CD14-positive monocyte (primary cell): ENCODE measurements at regions of chr22 and their contacts with region 1.

Region 1: GRCh38 chr22:38872172-38872830 is at the start of gene CBX6:
- DNase-seq: peak; percentile 86 to 91 (median 87)
- H3K4me3 ChIP-seq: peak within 1 kb of the TSS; percentile 90 to 95 (median 93)
- H3K4me3 Mint-ChIP-seq: peak within 1 kb of the TSS; percentile 95
- H3K27ac ChIP-seq: peak within 1 kb of the TSS; percentile 63 to 75
- H3K27ac Mint-ChIP-seq: peak within 1 kb of the TSS; percentile 87 to 97 (median 92)
- H3K4me1 ChIP-seq: peaks cover 29 to 43% of the 10 kb centered on the region in 2 donors
- H3K4me1 Mint-ChIP-seq: peaks cover 32% of the 10 kb centered on the region
- H3K27me3 ChIP-seq: peaks cover 0 to 16% of the 10 kb centered on the region in 2 donors
- H3K27me3 Mint-ChIP-seq: peaks cover 9 to 27% (median 24%) of the 10 kb centered on the region in 3 donors
- CTCF ChIP-seq: no peak
- polyA plus RNA-seq, gene CBX6: 2.1 to 26.7 (median 5.0) TPM

Region 2: GRCh38 chr22:38755911-38756532 is 116.3 kb before region 1 on chr22 and contains the start of gene SUN2:
- intact Hi-C with region 1: loop called in 1 of 2 experiments (anchors 5 kb)
- DNase-seq: peak; percentile 89 to 90 (median 90)
- H3K4me3 ChIP-seq: peak within 1 kb of the TSS; percentile 88 to 98 (median 92)
- H3K4me3 Mint-ChIP-seq: peak within 1 kb of the TSS; percentile 93 to 97
- H3K27ac ChIP-seq: peak within 1 kb of the TSS; percentile 99 to 100
- H3K27ac Mint-ChIP-seq: peak within 1 kb of the TSS; percentile 98 to 100 (median 99)
- H3K4me1 ChIP-seq: peaks cover 64 to 70% of the 10 kb centered on the region in 2 donors
- H3K4me1 Mint-ChIP-seq: peaks cover 68% of the 10 kb centered on the region
- H3K27me3 ChIP-seq: no peaks in the 10 kb centered on the region
- H3K27me3 Mint-ChIP-seq: peaks cover 0 to 3% (median 0%) of the 10 kb centered on the region in 3 donors
- CTCF ChIP-seq: no peak
- polyA plus RNA-seq, gene SUN2: 95.8 to 159 (median 97.8) TPM

Region 3: GRCh38 chr22:38967451-38968450 is 95.5 kb after region 1 on chr22:
- intact Hi-C with region 1: loop called in 1 of 2 experiments (anchors 5 kb)
- DNase-seq: peak; percentile 98 to 100 (median 99)
- H3K4me3 ChIP-seq: peak overlapping the region in 1 of 3 experiments; percentile 33
- H3K4me3 Mint-ChIP-seq: peak overlapping the region in 1 of 2 donors; percentile 64
- H3K27ac ChIP-seq: peak overlapping the region; percentile 80 to 88
- H3K27ac Mint-ChIP-seq: peak overlapping the region; percentile 91 to 99 (median 97)
- H3K4me1 ChIP-seq: peaks cover 86 to 95% of the 10 kb centered on the region in 2 donors
- H3K4me1 Mint-ChIP-seq: peaks cover 94% of the 10 kb centered on the region
- H3K27me3 ChIP-seq: no peaks in the 10 kb centered on the region
- H3K27me3 Mint-ChIP-seq: peaks cover 3 to 8% (median 4%) of the 10 kb centered on the region in 3 donors
- CTCF ChIP-seq: no peak

Region 4: GRCh38 chr22:39123751-39124601 is 251.7 kb after region 1 on chr22:
- intact Hi-C with region 1: loop called (anchors 5 kb)
- DNase-seq: no peak
- H3K4me3 ChIP-seq: no peak overlapping the region
- H3K4me3 Mint-ChIP-seq: peak overlapping the region in 1 of 2 donors; percentile 35
- H3K27ac ChIP-seq: no peak overlapping the region
- H3K27ac Mint-ChIP-seq: no peak overlapping the region
- H3K4me1 ChIP-seq: peaks cover 6 to 10% of the 10 kb centered on the region in 2 donors
- H3K4me1 Mint-ChIP-seq: peaks cover 9% of the 10 kb centered on the region
- H3K27me3 ChIP-seq: no peaks in the 10 kb centered on the region
- H3K27me3 Mint-ChIP-seq: peaks cover 2 to 5% (median 4%) of the 10 kb centered on the region in 3 donors
- CTCF ChIP-seq: no peak

Region 5: GRCh38 chr22:39319270-39320022 is 447.1 kb after region 1 on chr22 and contains the start of gene RPL3:
- intact Hi-C with region 1: loop called (anchors 2 to 10 kb)
- DNase-seq: peak; percentile 95 to 99 (median 98)
- H3K4me3 ChIP-seq: peak within 1 kb of the TSS; percentile 80 to 95 (median 93)
- H3K4me3 Mint-ChIP-seq: peak within 1 kb of the TSS; percentile 98 to 99
- H3K27ac ChIP-seq: peak within 1 kb of the TSS; percentile 94 to 96
- H3K27ac Mint-ChIP-seq: peak within 1 kb of the TSS; percentile 95 to 99 (median 99)
- H3K4me1 ChIP-seq: peaks cover 26 to 42% of the 10 kb centered on the region in 2 donors
- H3K4me1 Mint-ChIP-seq: peaks cover 37% of the 10 kb centered on the region
- H3K27me3 ChIP-seq: no peaks in the 10 kb centered on the region
- H3K27me3 Mint-ChIP-seq: peaks cover 0 to 3% (median 2%) of the 10 kb centered on the region in 3 donors
- CTCF ChIP-seq: no peak
- polyA plus RNA-seq, gene RPL3: 604 to 2,104 (median 698) TPM